ENCODE measurements at regions of chr9 and their contacts with region 1.

Region 1: DNA sequence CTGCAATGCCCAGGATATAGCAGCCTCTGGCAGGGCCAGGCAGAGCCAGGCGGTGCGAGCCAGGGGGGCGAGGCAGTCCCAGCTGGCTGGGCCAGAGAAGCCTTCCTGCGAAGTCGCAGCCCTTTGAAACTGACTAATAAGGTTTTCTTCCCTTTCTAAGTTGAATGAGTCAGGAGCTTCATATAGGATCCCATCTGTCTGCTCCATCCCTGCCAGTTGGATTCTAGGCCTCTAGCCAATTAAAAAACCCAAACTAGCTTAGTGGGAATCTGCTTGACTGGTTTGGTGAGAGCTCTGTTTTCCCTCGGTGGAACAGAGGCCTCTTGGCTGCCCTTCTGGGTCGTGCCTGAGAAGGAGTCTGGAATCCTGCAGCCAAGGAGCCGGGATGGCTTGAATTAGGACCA is 70.1 kb upstream of the RAPGEF1 start:
- DNase-seq: no peak
- H3K4me3 ChIP-seq: no peak overlapping the region
- H3K27ac ChIP-seq: no peak overlapping the region
- H3K4me1 ChIP-seq: no peaks in the 10 kb centered on the region
- H3K27me3 ChIP-seq: peaks cover 63% of the 10 kb centered on the region
- CTCF ChIP-seq: no peak

Region 2: GRCh38 chr9:131697097-131697496 is 112.8 kb before region 1 on chr9:
- dilution Hi-C with region 1: no loop called
- DNase-seq: no peak
- H3K4me3 ChIP-seq: no peak overlapping the region
- H3K27ac ChIP-seq: no peak overlapping the region
- H3K4me1 ChIP-seq: peaks cover 17% of the 10 kb centered on the region
- H3K27me3 ChIP-seq: no peaks in the 10 kb centered on the region
- CTCF ChIP-seq: no peak

Region 3: DNA sequence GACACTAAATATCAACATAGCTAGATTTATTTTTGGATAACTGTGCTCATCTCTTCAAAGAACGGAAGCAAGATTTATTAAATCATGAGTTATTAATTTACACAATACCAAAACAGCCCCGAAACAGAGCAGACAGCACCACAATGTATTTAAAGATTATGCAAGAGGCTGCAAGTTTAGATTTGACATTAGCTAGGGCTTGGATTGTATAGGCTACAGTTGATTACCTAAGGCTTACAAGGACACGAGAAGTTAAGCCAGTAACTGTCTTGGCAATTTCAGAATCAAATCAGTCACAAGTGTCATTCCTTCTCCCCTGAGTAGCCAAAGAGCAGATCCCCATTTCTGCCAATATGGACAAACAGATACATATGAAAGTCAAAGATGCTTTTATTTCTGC is 117.1 kb after region 1 on chr9:
- dilution Hi-C with region 1: no loop called
- DNase-seq: no peak
- H3K4me3 ChIP-seq: no peak overlapping the region
- H3K27ac ChIP-seq: no peak overlapping the region
- H3K4me1 ChIP-seq: no peaks in the 10 kb centered on the region
- H3K27me3 ChIP-seq: no peaks in the 10 kb centered on the region
- CTCF ChIP-seq: no peak

Region 4: GRCh38 chr9:132169672-132170392 is 359.9 kb after region 1 on chr9:
- dilution Hi-C with region 1: loop called (anchors 25 kb)
- DNase-seq: peak; percentile 13
- H3K4me3 ChIP-seq: no peak overlapping the region
- H3K27ac ChIP-seq: no peak overlapping the region
- H3K4me1 ChIP-seq: no peaks in the 10 kb centered on the region
- H3K27me3 ChIP-seq: peaks cover 65% of the 10 kb centered on the region
- CTCF ChIP-seq: peak; percentile 77 to 95 (median 93)